ENCODE measurements at regions of chr1 and their contacts with region 1.

Region 1: DNA sequence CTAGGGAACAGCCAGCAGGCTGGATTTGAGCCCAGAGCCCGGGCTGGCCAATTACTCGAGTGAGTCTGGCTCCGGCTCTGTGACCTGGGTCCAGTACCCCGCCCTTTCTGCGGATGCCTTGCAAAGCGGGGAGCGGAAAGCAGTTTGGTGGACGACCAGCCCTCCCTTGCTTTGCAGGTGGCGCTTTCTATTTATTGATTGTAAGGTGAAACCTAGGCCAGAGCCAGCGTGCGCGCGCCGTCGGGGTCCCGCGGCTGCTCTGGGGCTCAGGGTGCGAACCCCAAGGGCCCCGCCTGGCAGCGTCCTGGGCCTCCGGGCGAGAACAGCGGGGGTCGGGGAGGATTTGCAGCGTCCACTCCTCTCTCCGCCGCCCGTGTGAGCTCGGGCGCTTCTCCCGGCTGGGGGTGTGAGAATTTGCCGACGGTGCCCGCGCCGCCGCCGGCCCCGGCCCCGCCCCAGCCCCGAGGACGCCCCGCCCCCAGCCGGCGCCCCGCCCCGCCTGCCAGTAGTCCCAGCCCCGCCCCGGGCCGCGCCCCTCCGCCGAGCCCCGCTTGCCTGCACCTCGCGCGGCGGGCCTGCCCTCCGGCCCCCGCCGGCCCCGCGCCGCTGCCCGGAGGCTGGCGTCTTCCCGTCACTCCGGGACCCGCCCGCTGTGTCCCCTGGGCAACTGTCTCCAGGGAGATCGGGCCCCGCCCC is 37.6 kb downstream of the PIK3CD start:
- DNase-seq: peak; percentile 83
- H3K4me3 Mint-ChIP-seq: peak overlapping the region; percentile 67
- H3K27ac Mint-ChIP-seq: peak overlapping the region; percentile 46
- H3K4me1 Mint-ChIP-seq: peaks cover 69% of the 10 kb centered on the region
- H3K27me3 Mint-ChIP-seq: no peaks in the 10 kb centered on the region

Region 2: GRCh38 chr1:9671377-9672140 is 17.6 kb before region 1 on chr1:
- CTCF ChIA-PET with region 1: interaction called, 6 read pairs
- intact Hi-C with region 1: loop called (anchors 2 kb)
- DNase-seq: peak; percentile 59
- H3K4me3 Mint-ChIP-seq: peak overlapping the region; percentile 24
- H3K27ac Mint-ChIP-seq: peak overlapping the region; percentile 86
- H3K4me1 Mint-ChIP-seq: peaks cover 77% of the 10 kb centered on the region
- H3K27me3 Mint-ChIP-seq: no peaks in the 10 kb centered on the region

Region 3: DNA sequence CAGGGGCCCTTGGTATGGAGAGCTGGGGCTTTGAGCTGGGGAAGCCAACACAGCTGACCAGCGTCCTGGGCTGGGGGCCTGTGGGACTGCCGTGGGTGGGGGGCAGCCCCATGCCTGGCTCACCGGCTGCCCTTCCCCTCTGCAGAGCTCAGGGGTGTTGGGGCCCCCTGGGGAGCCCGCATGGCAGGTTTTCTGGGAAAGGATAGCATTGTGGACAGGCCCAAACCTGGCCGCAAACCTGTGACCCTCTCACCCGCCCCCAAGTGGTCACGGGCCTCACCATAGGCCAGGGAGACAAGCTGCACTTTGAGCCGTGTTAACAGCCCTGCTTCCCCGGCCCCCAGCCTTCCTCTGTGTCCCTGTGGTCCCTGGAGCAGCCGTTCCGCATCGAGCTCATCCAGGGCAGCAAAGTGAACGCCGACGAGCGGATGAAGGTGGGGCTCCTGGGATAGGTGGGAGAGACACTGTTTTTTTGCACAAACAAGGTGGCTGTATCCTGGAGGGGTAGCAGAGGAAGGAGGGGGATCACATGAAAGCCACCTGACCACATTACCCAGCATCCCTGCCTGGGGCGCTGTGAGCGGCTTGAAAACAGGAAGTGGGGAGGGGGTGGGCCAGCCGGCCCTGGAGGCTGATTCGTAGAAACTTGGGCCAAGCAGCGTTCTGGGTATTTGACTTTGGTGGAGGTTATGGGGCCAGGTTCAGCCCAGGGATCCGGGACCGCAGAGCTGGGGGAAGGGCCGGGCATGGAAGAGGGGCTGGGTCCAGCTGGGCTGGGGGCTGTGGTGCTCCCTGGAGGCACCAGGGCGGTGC is 28.2 kb after region 1 on chr1:
- CTCF ChIA-PET with region 1: interaction called, 14 read pairs
- intact Hi-C with region 1: loop called (anchors 1 kb)
- DNase-seq: peak; percentile 95
- H3K4me3 Mint-ChIP-seq: peak overlapping the region; percentile 90
- H3K27ac Mint-ChIP-seq: peak overlapping the region; percentile 90
- H3K4me1 Mint-ChIP-seq: peaks cover 70% of the 10 kb centered on the region
- H3K27me3 Mint-ChIP-seq: no peaks in the 10 kb centered on the region